Breast epithelium (tissue), 4 donors: ENCODE measurements at regions of chrX and their contacts with region 1.

Region 1: GRCh38 chrX:65894133-65894532 is 145.7 kb downstream of the VSIG4 start:
- DNase-seq: no peak
- H3K4me3 ChIP-seq: no peak overlapping the region
- H3K27ac ChIP-seq: no peak overlapping the region
- H3K4me1 ChIP-seq: no peaks in the 10 kb centered on the region
- H3K27me3 ChIP-seq: peaks cover 0 to 16% of the 10 kb centered on the region in 2 donors
- CTCF ChIP-seq: no peak
- POLR2A ChIP-seq: no peak

Region 2: DNA sequence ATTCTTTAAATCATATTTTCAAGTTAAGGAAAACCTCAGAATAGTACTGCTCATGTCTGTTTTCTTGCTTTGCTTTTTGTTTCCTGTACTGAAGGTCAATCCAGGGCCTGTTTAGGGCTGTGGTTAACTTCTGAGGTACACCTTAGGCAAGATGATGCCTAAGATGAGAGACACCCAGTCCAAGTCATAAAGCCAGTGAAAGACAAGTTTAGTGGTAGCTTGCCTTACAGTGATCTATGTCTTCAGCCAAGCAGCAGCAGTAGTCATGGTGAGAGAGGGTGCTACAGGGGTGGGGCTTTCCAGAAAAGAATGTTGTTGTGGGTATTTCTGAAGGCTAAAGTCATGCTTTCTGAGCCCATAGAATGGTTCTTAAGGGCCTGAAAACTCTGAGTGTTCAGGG is 28.0 kb before region 1 on chrX:
- intact Hi-C with region 1: loop called (anchors 2 kb)
- DNase-seq: no peak
- H3K4me3 ChIP-seq: no peak overlapping the region
- H3K27ac ChIP-seq: no peak overlapping the region
- H3K4me1 ChIP-seq: no peaks in the 10 kb centered on the region
- H3K27me3 ChIP-seq: peaks cover 0 to 18% of the 10 kb centered on the region in 2 donors
- CTCF ChIP-seq: no peak
- POLR2A ChIP-seq: no peak